Sigmoid colon (tissue), 7 donors: ENCODE measurements at regions of chr6 and their contacts with region 1.

Region 1: GRCh38 chr6:133568970-133569889 is 319.7 kb upstream of the TCF21 start:
- DNase-seq: peak; percentile 68
- H3K4me3 ChIP-seq: peak overlapping the region; percentile 8 to 40 (median 36)
- H3K27ac ChIP-seq: peak overlapping the region; percentile 24 to 65 (median 42)
- H3K4me1 ChIP-seq: peaks cover 0 to 10% (median 5%) of the 10 kb centered on the region in 4 donors
- H3K27me3 ChIP-seq: peaks cover 0 to 6% (median 0%) of the 10 kb centered on the region in 3 donors
- CTCF ChIP-seq: peak; percentile 69 to 98 (median 92)
- EP300 ChIP-seq: no peak
- POLR2A ChIP-seq: no peak

Region 2: DNA sequence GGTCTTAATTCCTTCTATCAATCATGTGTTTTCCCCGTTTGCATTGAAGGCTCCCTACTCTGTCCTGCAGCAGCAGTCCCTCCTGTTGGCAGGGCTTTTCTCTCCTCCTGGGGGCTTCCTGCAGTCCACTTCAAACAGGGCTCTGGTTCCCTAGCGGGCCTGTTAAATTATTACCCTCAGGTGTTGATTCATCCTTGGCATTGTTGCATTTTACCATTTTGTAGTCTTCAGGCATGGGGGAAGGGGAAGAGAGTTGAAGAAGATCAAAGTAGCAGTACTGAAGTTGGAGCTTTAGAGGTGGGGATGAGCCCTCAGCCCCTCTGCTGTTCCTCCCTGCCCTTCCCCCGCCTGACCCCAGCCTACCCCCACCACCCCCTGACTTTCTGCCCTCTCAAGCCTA is 158.6 kb before region 1 on chr6:
- intact Hi-C with region 1: no loop called
- DNase-seq: no peak
- H3K4me3 ChIP-seq: no peak overlapping the region
- H3K27ac ChIP-seq: no peak overlapping the region
- H3K4me1 ChIP-seq: no peaks in the 10 kb centered on the region
- H3K27me3 ChIP-seq: no peaks in the 10 kb centered on the region
- CTCF ChIP-seq: no peak
- EP300 ChIP-seq: no peak
- POLR2A ChIP-seq: no peak

Region 3: DNA sequence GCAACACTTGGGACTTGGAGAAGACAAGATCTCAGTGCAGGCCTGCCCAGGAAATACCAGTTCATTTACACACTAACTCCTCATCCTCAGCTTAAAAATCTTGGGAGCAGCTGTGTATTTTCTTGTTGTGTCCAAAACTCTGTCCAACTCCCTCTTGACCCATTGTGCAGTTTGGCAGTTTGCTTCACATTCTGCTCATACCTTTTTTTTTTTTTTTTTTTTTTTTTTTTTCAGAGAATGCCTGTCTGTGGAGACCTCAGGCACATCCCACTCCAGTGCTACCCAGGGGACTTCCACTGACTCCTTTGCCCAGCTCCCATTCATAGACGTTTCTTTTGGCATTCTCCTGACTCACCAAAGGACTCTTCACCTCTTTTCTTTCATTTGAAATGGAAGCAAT is 53.8 kb after region 1 on chr6:
- intact Hi-C with region 1: no loop called
- DNase-seq: peak; percentile 72
- H3K4me3 ChIP-seq: no peak overlapping the region
- H3K27ac ChIP-seq: peak overlapping the region in 2 of 4 donors; percentile 4 to 39
- H3K4me1 ChIP-seq: peaks cover 0 to 7% (median 0%) of the 10 kb centered on the region in 4 donors
- H3K27me3 ChIP-seq: no peaks in the 10 kb centered on the region
- CTCF ChIP-seq: no peak
- EP300 ChIP-seq: no peak
- POLR2A ChIP-seq: no peak

Region 4: DNA sequence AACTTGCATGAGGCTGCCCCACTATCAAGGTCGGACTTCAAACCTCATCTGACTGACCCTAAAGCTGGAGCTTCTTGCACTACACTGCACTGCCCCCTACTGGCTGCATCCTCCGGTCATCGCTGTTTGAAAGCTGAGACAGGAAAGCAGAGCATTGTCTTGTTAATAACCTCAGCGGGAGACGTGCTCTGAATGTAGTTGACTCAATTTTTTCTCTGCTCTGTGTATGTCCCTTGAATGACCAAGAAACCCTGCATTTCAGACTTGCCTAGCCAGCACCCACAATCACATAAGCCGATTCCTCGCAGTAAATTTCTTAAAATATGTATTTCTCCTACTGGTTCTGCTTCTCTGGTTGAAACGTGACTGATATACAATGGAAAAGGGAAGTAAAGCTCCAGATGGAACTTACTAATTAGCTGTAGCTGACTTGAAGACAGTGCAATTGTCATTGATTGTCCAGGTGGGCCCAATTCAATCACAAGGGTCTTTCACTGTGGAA is 347.5 kb after region 1 on chr6:
- intact Hi-C with region 1: loop called (anchors 2 kb)
- DNase-seq: peak; percentile 93
- H3K4me3 ChIP-seq: no peak overlapping the region
- H3K27ac ChIP-seq: no peak overlapping the region
- H3K4me1 ChIP-seq: no peaks in the 10 kb centered on the region
- H3K27me3 ChIP-seq: peaks cover 0 to 9% (median 0%) of the 10 kb centered on the region in 3 donors
- CTCF ChIP-seq: peak; percentile 46 to 81 (median 68)
- EP300 ChIP-seq: no peak
- POLR2A ChIP-seq: no peak